ENCODE measurements at regions of chrX and their contacts with region 1.

Region 1: DNA sequence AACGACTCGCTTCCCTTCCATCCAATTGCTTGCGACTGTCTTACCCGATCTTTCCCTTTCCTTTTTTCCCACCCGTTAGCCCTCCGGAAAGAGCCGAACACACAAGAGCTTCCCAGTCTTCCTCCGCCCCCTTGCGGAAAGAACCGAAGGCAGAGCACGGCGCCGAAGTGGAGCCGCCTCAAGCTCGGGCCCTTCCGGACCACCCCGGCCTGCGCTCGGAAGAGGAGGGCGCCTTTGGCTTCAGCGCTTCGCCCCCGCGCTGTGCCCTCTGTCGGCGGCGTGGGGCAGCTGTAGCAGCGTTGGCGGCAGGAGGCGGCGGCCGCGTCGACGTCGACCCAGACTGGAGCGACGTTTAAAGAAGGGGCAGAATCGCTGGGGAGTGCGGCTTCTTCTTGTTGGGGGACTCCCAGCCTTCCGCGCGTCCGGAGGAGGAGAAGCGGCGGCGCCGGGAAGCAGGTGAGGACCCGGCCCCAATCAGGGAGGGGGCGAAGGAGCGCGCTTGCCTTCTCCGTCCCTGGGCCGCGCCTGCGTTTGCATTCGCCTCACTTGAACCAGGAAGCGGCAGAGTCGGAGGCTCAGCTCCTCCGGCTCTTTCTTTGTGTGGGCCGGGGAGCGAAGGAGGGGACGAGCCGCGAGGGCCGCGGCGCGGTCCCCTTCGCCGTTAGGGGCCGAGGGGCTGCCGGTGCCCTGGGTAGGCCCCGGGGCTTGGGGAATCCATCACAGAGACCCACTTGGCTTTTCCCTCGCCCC is at the start of gene ZBTB33:
- DNase-seq: peak; percentile 90
- ATAC-seq: peak; percentile 99
- H3K4me3 ChIP-seq: peak within 1 kb of the TSS; percentile 69 to 77 (median 74)
- H3K4me3 Mint-ChIP-seq: peak within 1 kb of the TSS; percentile 88
- H3K27ac ChIP-seq: peak within 1 kb of the TSS; percentile 86 to 88
- H3K27ac Mint-ChIP-seq: peak within 1 kb of the TSS; percentile 98
- H3K4me1 ChIP-seq: no peaks in the 10 kb centered on the region
- H3K4me1 Mint-ChIP-seq: peaks cover 18% of the 10 kb centered on the region
- H3K27me3 ChIP-seq: no peaks in the 10 kb centered on the region
- H3K27me3 Mint-ChIP-seq: no peaks in the 10 kb centered on the region
- CTCF ChIP-seq: peak; percentile 73
- total RNA-seq, gene ZBTB33: 21.6 and 22.0 TPM in 2 replicates

Region 2: DNA sequence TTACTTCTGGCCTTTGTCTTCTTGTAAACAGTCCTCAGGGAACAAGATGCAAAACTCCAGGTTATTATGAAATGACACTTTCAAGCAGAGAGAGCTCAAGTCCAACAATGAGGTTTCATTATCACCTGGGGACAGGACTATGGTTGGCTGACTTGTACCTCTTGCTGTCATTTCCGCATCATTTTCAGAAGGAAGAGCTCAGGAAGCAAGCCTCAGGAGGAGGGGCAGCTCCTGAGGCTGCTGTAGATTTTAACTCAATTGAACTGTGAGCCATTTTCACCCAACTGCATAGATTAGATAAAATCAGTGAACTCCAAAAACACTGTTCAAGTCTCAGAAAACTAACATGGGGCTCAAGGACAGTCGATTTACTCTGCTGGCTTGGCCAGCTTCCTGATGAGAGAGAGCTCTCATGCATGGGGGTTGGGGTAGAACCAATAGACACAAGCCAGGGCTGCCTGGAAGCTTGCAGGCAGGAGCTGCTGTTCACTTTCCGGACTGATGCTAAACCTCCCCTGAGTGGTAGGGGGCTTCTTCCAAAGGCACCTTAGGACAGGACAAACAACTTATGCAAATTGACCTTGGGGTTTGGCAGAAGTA is 36.9 kb after region 1 on chrX:
- CTCF ChIA-PET with region 1: interaction called, 4 read pairs
- POLR2A ChIA-PET with region 1: no interaction called
- intact Hi-C with region 1: loop called (anchors 5 kb)
- DNase-seq: no peak
- ATAC-seq: no peak
- H3K4me3 ChIP-seq: no peak overlapping the region
- H3K4me3 Mint-ChIP-seq: no peak overlapping the region
- H3K27ac ChIP-seq: no peak overlapping the region
- H3K27ac Mint-ChIP-seq: no peak overlapping the region
- H3K4me1 ChIP-seq: peaks cover 7 to 17% of the 10 kb centered on the region in 2 donors
- H3K4me1 Mint-ChIP-seq: peaks cover 17% of the 10 kb centered on the region
- H3K27me3 ChIP-seq: no peaks in the 10 kb centered on the region
- H3K27me3 Mint-ChIP-seq: no peaks in the 10 kb centered on the region
- CTCF ChIP-seq: no peak

Region 3: DNA sequence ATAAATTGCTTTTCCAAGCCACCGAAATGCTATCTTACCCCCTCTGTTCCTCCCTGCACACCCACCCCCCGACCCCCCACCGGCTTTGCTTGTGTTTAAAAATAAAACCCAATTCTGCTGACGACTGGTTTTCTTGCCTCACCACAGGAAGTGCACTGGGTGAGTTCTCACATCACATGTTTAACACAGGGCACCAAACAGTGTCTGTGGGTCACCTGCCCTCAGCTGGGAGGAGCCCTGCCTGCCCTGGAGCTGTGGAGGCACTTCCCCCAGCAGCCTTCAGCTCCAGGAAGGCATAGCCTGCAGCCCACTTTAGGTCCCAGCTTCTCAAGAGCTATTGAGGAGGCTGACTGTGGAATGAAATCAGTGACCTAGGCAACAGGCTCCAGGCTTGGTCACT is 51.7 kb after region 1 on chrX:
- CTCF ChIA-PET with region 1: interaction called, 11 read pairs
- POLR2A ChIA-PET with region 1: no interaction called
- intact Hi-C with region 1: no loop called
- DNase-seq: peak; percentile 73
- ATAC-seq: peak; percentile 98
- H3K4me3 ChIP-seq: peak overlapping the region in 2 of 5 experiments; percentile 7 to 40
- H3K4me3 Mint-ChIP-seq: peak overlapping the region; percentile 76
- H3K27ac ChIP-seq: peak overlapping the region; percentile 22 to 46
- H3K27ac Mint-ChIP-seq: peak overlapping the region; percentile 86
- H3K4me1 ChIP-seq: peaks cover 27 to 37% of the 10 kb centered on the region in 2 donors
- H3K4me1 Mint-ChIP-seq: peaks cover 31% of the 10 kb centered on the region
- H3K27me3 ChIP-seq: no peaks in the 10 kb centered on the region
- H3K27me3 Mint-ChIP-seq: no peaks in the 10 kb centered on the region
- CTCF ChIP-seq: no peak

Region 4: DNA sequence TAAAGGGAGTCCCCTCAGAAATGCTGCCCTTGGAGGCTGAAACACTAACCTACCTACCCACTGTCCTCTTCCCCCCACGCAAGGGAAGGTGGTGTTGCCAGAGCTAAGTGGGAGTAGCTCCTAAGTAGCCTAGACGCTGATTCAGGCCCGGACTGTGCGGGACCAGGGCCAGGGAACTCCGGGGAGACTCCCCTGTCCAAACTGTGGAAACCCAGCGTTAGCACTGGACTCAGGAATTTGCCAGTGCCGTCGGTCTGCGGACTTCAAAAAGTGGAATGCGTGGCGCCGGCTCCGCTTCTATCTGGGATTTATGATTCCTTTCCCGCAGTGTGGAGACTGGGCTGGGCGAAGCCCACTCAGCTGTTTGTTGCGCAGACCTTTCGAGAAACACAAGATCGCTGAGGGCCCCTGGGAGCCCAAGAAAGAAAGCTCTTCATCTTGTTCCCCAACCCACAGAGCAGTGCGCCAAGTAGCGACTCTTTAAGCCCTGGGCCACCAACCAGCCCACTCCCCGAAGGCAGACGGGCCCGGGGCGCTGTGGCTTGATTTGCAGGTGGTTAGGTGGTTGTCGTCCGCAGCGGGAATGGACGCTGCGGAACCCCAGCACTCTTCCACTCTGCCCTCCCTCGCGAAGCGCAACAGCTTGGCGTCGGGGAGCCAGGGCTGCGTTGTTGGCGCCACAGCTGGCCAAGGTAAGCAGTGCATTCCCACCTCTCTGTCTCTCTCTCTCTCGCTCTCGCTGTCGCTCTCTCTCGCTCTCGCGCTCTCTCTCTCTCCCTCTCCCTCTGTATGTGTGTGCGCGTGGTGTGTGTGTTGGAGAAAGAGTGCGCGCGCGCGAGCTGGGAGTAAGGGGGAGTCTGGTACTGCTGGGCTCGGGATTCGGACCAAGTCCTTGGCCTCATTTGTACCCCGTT is 58.5 kb after region 1 on chrX:
- CTCF ChIA-PET with region 1: interaction called, 12 read pairs
- POLR2A ChIA-PET with region 1: interaction called, 8 read pairs
- intact Hi-C with region 1: loop called (anchors 1 kb)
- DNase-seq: peak; percentile 81
- ATAC-seq: peak; percentile 95
- H3K4me3 ChIP-seq: peak overlapping the region; percentile 47 to 69 (median 61)
- H3K4me3 Mint-ChIP-seq: peak overlapping the region; percentile 92
- H3K27ac ChIP-seq: no peak overlapping the region
- H3K27ac Mint-ChIP-seq: peak overlapping the region; percentile 87
- H3K4me1 ChIP-seq: peaks cover 16 to 30% of the 10 kb centered on the region in 2 donors
- H3K4me1 Mint-ChIP-seq: peaks cover 21% of the 10 kb centered on the region
- H3K27me3 ChIP-seq: peaks cover 0 to 29% (median 12%) of the 10 kb centered on the region in 4 experiments
- H3K27me3 Mint-ChIP-seq: peaks cover 22% of the 10 kb centered on the region
- CTCF ChIP-seq: peak; percentile 51

Region 5: GRCh38 chrX:120468825-120469525 is 218.3 kb after region 1 on chrX and contains the start of gene LAMP2:
- CTCF ChIA-PET with region 1: no interaction called
- POLR2A ChIA-PET with region 1: no interaction called
- intact Hi-C with region 1: loop called (anchors 2 kb)
- DNase-seq: peak; percentile 87
- ATAC-seq: peak; percentile 96
- H3K4me3 ChIP-seq: peak within 1 kb of the TSS; percentile 62 to 88 (median 80)
- H3K4me3 Mint-ChIP-seq: peak within 1 kb of the TSS; percentile 85
- H3K27ac ChIP-seq: peak within 1 kb of the TSS; percentile 78 to 88
- H3K27ac Mint-ChIP-seq: peak within 1 kb of the TSS; percentile 92
- H3K4me1 ChIP-seq: peaks cover 7 to 11% of the 10 kb centered on the region in 2 donors
- H3K4me1 Mint-ChIP-seq: peaks cover 27% of the 10 kb centered on the region
- H3K27me3 ChIP-seq: no peaks in the 10 kb centered on the region
- H3K27me3 Mint-ChIP-seq: no peaks in the 10 kb centered on the region
- CTCF ChIP-seq: no peak
- total RNA-seq, gene LAMP2: 35.0 and 37.1 TPM in 2 replicates

Measured in B cell (primary cell).